IMR-90 (cell line): ENCODE measurements at regions of chr3 and their contacts with region 1.

Region 1: GRCh38 chr3:47164007-47164881 is at the start of gene SETD2:
- DNase-seq: peak; percentile 90
- ATAC-seq: peak; percentile 91
- H3K4me3 ChIP-seq: peak within 1 kb of the TSS; percentile 85
- H3K27ac ChIP-seq: peak within 1 kb of the TSS; percentile 90
- H3K4me1 ChIP-seq: peaks cover 6% of the 10 kb centered on the region
- H3K27me3 ChIP-seq: no peaks in the 10 kb centered on the region
- CTCF ChIP-seq: peak; percentile 30
- POLR2A ChIP-seq: peak; percentile 8; the same call in 1 of the 2 replicates
- RAD21 ChIP-seq: peak; percentile 27; the same call in 1 of the 2 replicates
- total RNA-seq, gene SETD2: 20.1 and 30.3 TPM in 2 replicates

Region 2: GRCh38 chr3:46935168-46935858 is 228.9 kb before region 1 on chr3:
- CTCF ChIA-PET with region 1: no interaction called
- POLR2A ChIA-PET with region 1: no interaction called
- dilution Hi-C with region 1: no loop called
- in situ Hi-C with region 1: no loop called
- intact Hi-C with region 1: loop called (anchors 10 kb)
- DNase-seq: peak; percentile 96
- ATAC-seq: peak; percentile 95
- H3K4me3 ChIP-seq: no peak overlapping the region
- H3K27ac ChIP-seq: peak overlapping the region; percentile 91
- H3K4me1 ChIP-seq: peaks cover 52% of the 10 kb centered on the region
- H3K27me3 ChIP-seq: no peaks in the 10 kb centered on the region
- CTCF ChIP-seq: peak; percentile 93
- POLR2A ChIP-seq: no peak
- RAD21 ChIP-seq: peak; percentile 64

Region 3: DNA sequence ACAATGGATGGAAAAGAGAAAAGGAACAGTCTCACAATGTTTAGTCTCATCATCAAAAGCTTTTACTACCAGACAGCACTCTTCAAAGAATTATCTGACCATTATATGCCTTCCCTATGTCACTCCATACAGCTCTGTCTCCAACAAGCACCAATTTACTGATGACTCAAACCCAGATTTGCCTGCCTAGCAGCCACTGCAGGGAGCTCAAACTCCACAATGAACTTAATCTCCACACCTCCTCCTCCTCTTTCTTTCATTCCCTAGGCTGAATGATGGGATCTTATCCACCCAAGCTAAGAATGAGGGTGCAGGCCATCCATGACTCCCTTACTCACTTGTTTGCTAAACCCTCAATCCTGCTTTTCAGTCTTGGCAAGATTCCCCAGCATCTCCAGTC is 139.3 kb before region 1 on chr3:
- CTCF ChIA-PET with region 1: no interaction called
- POLR2A ChIA-PET with region 1: no interaction called
- dilution Hi-C with region 1: no loop called
- in situ Hi-C with region 1: no loop called
- intact Hi-C with region 1: loop called (anchors 5 kb)
- DNase-seq: peak; percentile 59
- ATAC-seq: peak; percentile 86
- H3K4me3 ChIP-seq: no peak overlapping the region
- H3K27ac ChIP-seq: no peak overlapping the region
- H3K4me1 ChIP-seq: peaks cover 5% of the 10 kb centered on the region
- H3K27me3 ChIP-seq: no peaks in the 10 kb centered on the region
- CTCF ChIP-seq: no peak; the same call in 1 of the 2 replicates
- POLR2A ChIP-seq: no peak
- RAD21 ChIP-seq: peak; percentile 33; the same call in 1 of the 2 replicates

Region 4: DNA sequence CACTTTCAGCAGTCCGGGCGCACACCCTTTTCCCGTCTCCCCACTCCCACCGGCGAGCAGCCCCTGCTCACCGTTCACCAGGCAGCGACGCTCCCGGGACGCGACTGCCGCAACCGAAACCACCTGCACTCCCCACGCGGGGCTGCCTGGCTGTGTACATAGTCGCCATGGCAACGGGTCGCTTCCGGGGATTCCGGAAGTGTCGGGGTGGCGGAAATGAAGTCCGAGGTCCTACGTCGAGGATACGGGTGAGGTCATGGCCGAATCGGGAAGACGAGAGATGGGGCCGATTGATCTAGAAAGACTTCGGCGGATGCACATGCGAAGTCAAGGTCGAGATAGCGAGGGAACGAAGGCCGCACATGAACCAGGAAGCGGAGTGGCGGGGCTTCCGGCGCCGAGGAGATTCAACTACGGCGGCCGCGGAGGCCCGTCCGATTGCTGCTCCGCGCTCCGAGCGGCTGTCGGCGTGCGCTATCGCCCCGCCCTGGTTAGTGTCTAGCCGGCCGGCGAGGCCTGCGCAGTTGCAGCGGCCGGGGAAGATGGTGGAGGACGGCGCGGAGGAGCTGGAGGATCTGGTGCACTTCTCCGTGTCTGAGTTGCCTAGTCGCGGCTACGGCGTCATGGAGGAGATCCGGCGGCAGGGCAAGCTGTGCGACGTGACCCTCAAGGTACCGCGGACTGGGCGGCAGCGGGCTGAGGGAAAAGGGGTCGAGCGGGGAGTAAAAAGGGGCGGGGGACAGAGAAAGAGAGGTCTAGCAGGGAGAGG is 118.4 kb after region 1 on chr3 and contains the starts of genes KIF9 and KLHL18:
- CTCF ChIA-PET with region 1: no interaction called
- POLR2A ChIA-PET with region 1: interaction called, 3 read pairs
- dilution Hi-C with region 1: no loop called
- in situ Hi-C with region 1: no loop called
- intact Hi-C with region 1: loop called (anchors 1 kb)
- DNase-seq: peak; percentile 93
- ATAC-seq: peak; percentile 97
- H3K4me3 ChIP-seq: peak within 1 kb of the TSS; percentile 60
- H3K27ac ChIP-seq: peak within 1 kb of the TSS; percentile 94
- H3K4me1 ChIP-seq: peaks cover 4% of the 10 kb centered on the region; the same call in 1 of the 2 replicates
- H3K27me3 ChIP-seq: no peaks in the 10 kb centered on the region
- CTCF ChIP-seq: no peak
- POLR2A ChIP-seq: peak; percentile 91
- RAD21 ChIP-seq: no peak
- total RNA-seq, gene KIF9: 1.8 and 3.6 TPM in 2 replicates
- total RNA-seq, gene KLHL18: 38.9 and 76.2 TPM in 2 replicates

Region 5: GRCh38 chr3:48058091-48058490 is 893.8 kb after region 1 on chr3:
- CTCF ChIA-PET with region 1: no interaction called
- POLR2A ChIA-PET with region 1: no interaction called
- dilution Hi-C with region 1: no loop called
- in situ Hi-C with region 1: no loop called
- intact Hi-C with region 1: no loop called
- DNase-seq: no peak
- ATAC-seq: peak; percentile 48; the same call in 1 of the 2 replicates
- H3K4me3 ChIP-seq: no peak overlapping the region
- H3K27ac ChIP-seq: no peak overlapping the region
- H3K4me1 ChIP-seq: peaks cover 1% of the 10 kb centered on the region; the same call in 1 of the 2 replicates
- H3K27me3 ChIP-seq: no peaks in the 10 kb centered on the region
- CTCF ChIP-seq: no peak
- POLR2A ChIP-seq: no peak
- RAD21 ChIP-seq: no peak